ENCODE measurements at regions of chr16 and their contacts with region 1.

Region 1: GRCh38 chr16:67892899-67893742 is at the start of gene PSKH1:
- DNase-seq: peak; percentile 93 to 94 (median 94)
- H3K4me3 ChIP-seq: peak within 1 kb of the TSS; percentile 87 to 98 (median 94)
- H3K27ac ChIP-seq: peak within 1 kb of the TSS; percentile 91 to 96
- H3K4me1 ChIP-seq: peaks cover 11 to 19% (median 14%) of the 10 kb centered on the region in 4 experiments
- H3K27me3 ChIP-seq: no peaks in the 10 kb centered on the region

Region 2: GRCh38 chr16:67935402-67936123 is 42.4 kb after region 1 on chr16:
- CTCF ChIA-PET with region 1: interaction called, 359 read pairs
- POLR2A ChIA-PET with region 1: no interaction called
- DNase-seq: peak; percentile 91 to 96 (median 95)
- H3K4me3 ChIP-seq: peak overlapping the region; percentile 85 to 99 (median 96)
- H3K27ac ChIP-seq: peak overlapping the region; percentile 64 to 88
- H3K4me1 ChIP-seq: peaks cover 4 to 31% (median 29%) of the 10 kb centered on the region in 4 experiments
- H3K27me3 ChIP-seq: no peaks in the 10 kb centered on the region